Heart left ventricle (tissue), 16 donors: ENCODE measurements at regions of chr19 and their contacts with region 1.

Region 1: GRCh38 chr19:5048091-5048726 is 79.3 kb downstream of the KDM4B start:
- DNase-seq: peak; percentile 72 to 86 (median 77)
- ATAC-seq: peak; percentile 66 to 88 (median 85)
- H3K4me3 ChIP-seq: no peak overlapping the region
- H3K27ac ChIP-seq: no peak overlapping the region
- H3K4me1 ChIP-seq: peaks cover 0 to 49% (median 23%) of the 10 kb centered on the region in 12 donors
- H3K27me3 ChIP-seq: no peaks in the 10 kb centered on the region
- CTCF ChIP-seq: peak; percentile 92 to 98 (median 96)
- POLR2A ChIP-seq: no peak

Region 2: DNA sequence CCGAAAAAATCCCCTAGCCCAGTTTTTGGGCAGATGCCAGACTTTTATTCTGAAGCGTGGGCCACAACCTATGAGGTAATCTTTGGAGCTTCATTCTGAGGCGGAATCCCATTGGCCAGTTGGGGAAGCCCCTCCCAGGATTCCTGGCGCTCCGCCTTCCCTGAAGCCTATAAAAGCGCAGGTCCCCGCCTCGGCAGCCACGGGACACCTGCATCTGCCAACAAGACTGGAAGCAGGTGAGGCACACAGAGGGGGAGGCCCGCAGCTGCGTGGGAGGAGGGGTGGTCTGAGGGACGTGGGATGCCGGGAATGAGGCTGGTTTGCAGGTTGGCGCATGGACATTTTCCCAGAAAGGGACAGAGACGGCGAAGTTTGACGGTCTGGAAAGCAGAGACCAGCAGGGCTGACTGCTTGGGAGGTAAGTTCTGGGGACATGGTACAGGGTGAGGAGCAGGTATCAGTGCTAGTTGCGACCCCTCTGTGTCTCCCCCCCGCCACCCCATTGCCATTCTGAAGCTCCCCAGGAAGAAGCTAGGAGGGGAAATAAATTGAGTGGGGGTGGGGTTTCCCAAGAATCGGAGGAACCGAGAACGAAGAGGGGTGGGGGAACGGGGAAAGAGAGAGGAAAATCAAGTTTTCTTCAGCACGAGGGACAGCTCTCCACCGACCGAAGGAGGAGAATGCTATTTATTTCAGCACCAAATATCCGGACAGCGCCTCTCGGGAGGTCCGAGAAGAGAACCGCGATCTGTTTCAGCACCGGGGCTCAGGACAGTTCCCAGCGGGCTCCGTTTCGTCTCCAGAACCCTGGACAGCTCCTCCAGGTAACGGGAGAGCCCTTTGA is 279.1 kb before region 1 on chr19:
- intact Hi-C with region 1: no loop called
- DNase-seq: peak; percentile 75 to 85 (median 83)
- ATAC-seq: peak; percentile 29 to 92 (median 86)
- H3K4me3 ChIP-seq: no peak overlapping the region
- H3K27ac ChIP-seq: no peak overlapping the region
- H3K4me1 ChIP-seq: no peaks in the 10 kb centered on the region
- H3K27me3 ChIP-seq: peaks cover 0 to 4% (median 0%) of the 10 kb centered on the region in 9 donors
- CTCF ChIP-seq: no peak
- POLR2A ChIP-seq: no peak

Region 3: GRCh38 chr19:4993683-4994082 is 54.5 kb before region 1 on chr19:
- intact Hi-C with region 1: no loop called
- DNase-seq: no peak
- ATAC-seq: no peak
- H3K4me3 ChIP-seq: no peak overlapping the region
- H3K27ac ChIP-seq: no peak overlapping the region
- H3K4me1 ChIP-seq: peaks cover 3 to 28% (median 9%) of the 10 kb centered on the region in 12 donors
- H3K27me3 ChIP-seq: no peaks in the 10 kb centered on the region
- CTCF ChIP-seq: no peak
- POLR2A ChIP-seq: no peak

Region 4: GRCh38 chr19:5138606-5139582 is 90.7 kb after region 1 on chr19:
- intact Hi-C with region 1: loop called in 4 of 10 experiments (anchors 5 to 10 kb)
- DNase-seq: peak; percentile 52 to 80 (median 62)
- ATAC-seq: peak in 3 of 4 donors; percentile 3 to 48 (median 25)
- H3K4me3 ChIP-seq: no peak overlapping the region
- H3K27ac ChIP-seq: no peak overlapping the region
- H3K4me1 ChIP-seq: peaks cover 0 to 33% (median 9%) of the 10 kb centered on the region in 12 donors
- H3K27me3 ChIP-seq: no peaks in the 10 kb centered on the region
- CTCF ChIP-seq: peak in 1 of 12 donors; percentile 2
- POLR2A ChIP-seq: no peak

Region 5: GRCh38 chr19:5154129-5154798 is 106.1 kb after region 1 on chr19:
- intact Hi-C with region 1: loop called in 4 of 10 experiments (anchors 5 kb)
- DNase-seq: peak in 3 of 5 donors; percentile 11 to 61 (median 28)
- ATAC-seq: peak in 3 of 4 donors; percentile 27 to 37 (median 32)
- H3K4me3 ChIP-seq: no peak overlapping the region
- H3K27ac ChIP-seq: no peak overlapping the region
- H3K4me1 ChIP-seq: no peaks in the 10 kb centered on the region
- H3K27me3 ChIP-seq: no peaks in the 10 kb centered on the region
- CTCF ChIP-seq: peak in 11 of 12 donors; percentile 18 to 49 (median 33)
- POLR2A ChIP-seq: no peak

Region 6: GRCh38 chr19:5369962-5370367 is 321.8 kb after region 1 on chr19:
- intact Hi-C with region 1: loop called in 2 of 10 experiments (anchors 5 to 10 kb)
- DNase-seq: no peak
- ATAC-seq: no peak
- H3K4me3 ChIP-seq: no peak overlapping the region
- H3K27ac ChIP-seq: no peak overlapping the region
- H3K4me1 ChIP-seq: no peaks in the 10 kb centered on the region
- H3K27me3 ChIP-seq: peaks cover 0 to 41% (median 0%) of the 10 kb centered on the region in 9 donors
- CTCF ChIP-seq: peak in 7 of 12 donors; percentile 15 to 41 (median 30)
- POLR2A ChIP-seq: no peak

Region 7: DNA sequence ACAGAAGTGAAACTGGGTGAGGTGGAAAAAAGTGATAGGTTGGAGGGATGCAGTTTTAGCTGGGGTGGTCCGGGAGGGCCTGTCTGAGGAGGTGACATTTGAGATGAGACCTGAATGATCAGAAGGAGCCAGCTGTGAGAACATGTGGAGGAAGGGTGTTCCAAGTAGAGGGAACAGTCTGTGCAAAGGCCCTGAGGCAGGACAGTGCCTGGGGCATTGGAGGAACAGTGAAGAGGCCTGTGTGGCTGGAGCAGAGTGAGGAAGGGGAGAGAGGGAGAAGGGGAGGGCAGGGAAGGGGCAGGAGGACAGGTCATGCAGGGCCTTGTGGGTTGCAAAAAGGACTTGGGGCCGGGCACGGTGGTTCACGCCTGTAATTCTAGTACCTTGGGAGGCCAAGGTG is 328.7 kb after region 1 on chr19:
- intact Hi-C with region 1: loop called in 2 of 10 experiments (anchors 5 to 10 kb)
- DNase-seq: no peak
- ATAC-seq: no peak
- H3K4me3 ChIP-seq: no peak overlapping the region
- H3K27ac ChIP-seq: no peak overlapping the region
- H3K4me1 ChIP-seq: no peaks in the 10 kb centered on the region
- H3K27me3 ChIP-seq: peaks cover 0 to 19% (median 0%) of the 10 kb centered on the region in 9 donors
- CTCF ChIP-seq: no peak
- POLR2A ChIP-seq: no peak

Region 8: DNA sequence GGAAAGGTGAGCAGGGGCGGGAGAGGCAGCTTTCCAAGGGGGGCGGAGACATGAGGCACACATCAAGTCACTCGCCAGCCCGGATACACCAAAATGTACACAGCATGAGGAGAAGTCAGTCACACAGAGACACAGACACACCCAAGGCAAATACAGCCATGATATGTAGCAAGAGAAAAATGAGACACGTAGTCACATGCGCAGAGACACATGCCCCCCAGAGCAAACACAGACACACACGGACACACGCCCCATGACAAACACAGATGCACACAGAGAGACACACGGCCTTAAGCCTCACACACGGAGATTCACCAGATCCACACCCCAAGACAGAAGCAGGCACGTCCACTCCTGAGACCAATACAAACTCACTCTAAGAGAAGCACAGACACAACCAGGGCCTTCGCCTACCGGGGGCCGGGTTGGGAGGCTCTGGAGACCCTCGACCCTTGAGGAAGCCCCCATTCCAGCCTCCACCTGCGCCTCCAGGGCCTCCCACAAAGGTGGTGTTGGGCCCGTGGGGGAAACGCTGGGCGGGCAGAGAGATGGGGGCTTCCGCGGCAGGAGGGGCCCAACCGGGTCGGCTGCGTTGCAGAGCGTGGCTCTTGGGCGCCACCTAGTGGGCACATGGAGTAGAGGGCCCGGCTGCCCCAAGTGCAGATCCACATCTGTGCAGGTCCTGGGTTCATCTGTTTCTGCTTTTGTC is 529.7 kb after region 1 on chr19:
- intact Hi-C with region 1: loop called (anchors 1 to 10 kb)
- DNase-seq: peak; percentile 44 to 81 (median 60)
- ATAC-seq: peak; percentile 58 to 83 (median 79)
- H3K4me3 ChIP-seq: no peak overlapping the region
- H3K27ac ChIP-seq: no peak overlapping the region
- H3K4me1 ChIP-seq: peaks cover 0 to 8% (median 3%) of the 10 kb centered on the region in 12 donors
- H3K27me3 ChIP-seq: no peaks in the 10 kb centered on the region
- CTCF ChIP-seq: peak; percentile 93 to 100 (median 99)
- POLR2A ChIP-seq: no peak